K562 (cell line): ENCODE measurements at regions of chr4 and their contacts with region 1.

Region 1: DNA sequence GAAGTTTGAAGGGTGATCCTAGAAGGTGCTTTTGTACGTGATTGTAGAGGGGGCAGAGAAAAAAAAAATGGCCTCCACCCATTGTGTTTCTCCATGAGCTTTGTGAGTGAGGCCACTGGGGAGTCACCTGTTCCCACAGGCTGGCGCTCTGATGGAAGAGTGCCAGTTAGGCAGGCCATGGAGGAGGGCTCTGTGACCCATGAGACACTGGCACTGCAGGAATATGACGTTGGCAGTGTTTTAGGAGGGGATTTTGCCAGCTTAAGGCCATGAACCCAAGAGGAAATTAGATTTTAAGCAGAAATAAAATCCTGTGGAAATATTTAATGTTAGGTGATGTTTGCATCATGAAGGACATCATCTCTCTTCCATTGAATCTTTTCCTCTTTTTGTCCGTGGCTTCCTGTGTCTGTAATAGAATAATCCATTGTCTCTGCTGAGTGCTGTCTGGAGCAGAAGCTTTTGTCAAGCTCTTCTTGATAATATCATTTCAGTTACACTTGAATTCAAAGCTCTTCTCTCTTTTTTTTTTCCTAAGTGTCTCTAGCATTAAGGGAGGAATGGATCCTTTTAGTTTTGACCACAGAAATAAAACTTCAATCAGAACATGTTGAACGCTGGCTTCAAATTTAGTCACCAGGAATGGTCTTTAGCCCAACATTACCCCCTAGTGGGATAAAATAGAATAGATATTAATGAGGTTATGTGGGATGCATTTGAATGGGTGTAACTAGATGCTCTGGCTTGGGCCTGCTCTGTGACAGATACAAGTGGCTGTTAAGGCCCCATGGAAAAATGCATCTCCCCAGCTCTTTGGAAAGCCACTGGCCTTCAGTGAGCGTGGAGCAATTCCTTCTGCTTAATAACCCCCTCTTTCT is 41.0 kb upstream of the UCP1 start:
- DNase-seq: peak; percentile 22 to 54 (median 38)
- ATAC-seq: peak; percentile 86
- H3K4me3 ChIP-seq: no peak overlapping the region
- H3K27ac ChIP-seq: no peak overlapping the region
- H3K4me1 ChIP-seq: no peaks in the 10 kb centered on the region
- H3K27me3 ChIP-seq: peaks cover 3 to 4% of the 10 kb centered on the region in 2 experiments; a peak in 3 of 5 replicates
- CTCF ChIP-seq: peak; percentile 46 to 71 (median 54); a peak in 5 of 6 replicates
- EP300 ChIP-seq: no peak
- POLR2A ChIP-seq: no peak
- RAD21 ChIP-seq: peak; percentile 67 to 78

Region 2: GRCh38 chr4:140395668-140396067 is 214.1 kb before region 1 on chr4:
- CTCF ChIA-PET with region 1: interaction called, 8 read pairs
- POLR2A ChIA-PET with region 1: no interaction called
- in situ Hi-C with region 1: no loop called
- intact Hi-C with region 1: loop called (anchors 1 kb)
- DNase-seq: peak in 1 of 4 experiments; percentile 7
- ATAC-seq: no peak
- H3K4me3 ChIP-seq: no peak overlapping the region
- H3K27ac ChIP-seq: no peak overlapping the region
- H3K4me1 ChIP-seq: no peaks in the 10 kb centered on the region
- H3K27me3 ChIP-seq: no peaks in the 10 kb centered on the region; a peak in 1 of 5 replicates
- CTCF ChIP-seq: peak in 1 of 3 experiments; percentile 38; a peak in 2 of 6 replicates
- EP300 ChIP-seq: no peak
- POLR2A ChIP-seq: no peak
- RAD21 ChIP-seq: peak; percentile 16 to 33; a peak in 2 of 4 replicates

Region 3: GRCh38 chr4:141788169-141788915 is 1178.6 kb after region 1 on chr4:
- CTCF ChIA-PET with region 1: no interaction called
- POLR2A ChIA-PET with region 1: no interaction called
- in situ Hi-C with region 1: no loop called
- intact Hi-C with region 1: no loop called
- DNase-seq: no peak
- ATAC-seq: no peak
- H3K4me3 ChIP-seq: no peak overlapping the region
- H3K27ac ChIP-seq: no peak overlapping the region
- H3K4me1 ChIP-seq: no peaks in the 10 kb centered on the region
- H3K27me3 ChIP-seq: no peaks in the 10 kb centered on the region
- CTCF ChIP-seq: no peak
- EP300 ChIP-seq: no peak
- POLR2A ChIP-seq: no peak
- RAD21 ChIP-seq: no peak